ENCODE measurements at regions of chr1 and their contacts with region 1.

Region 1: GRCh38 chr1:235999259-235999925 is 65.5 kb downstream of the NID1 start:
- DNase-seq: peak; percentile 74
- H3K4me3 ChIP-seq: no peak overlapping the region
- H3K27ac ChIP-seq: peak overlapping the region; percentile 90
- H3K27me3 ChIP-seq: no peaks in the 10 kb centered on the region
- CTCF ChIP-seq: no peak

Region 2: GRCh38 chr1:235739124-235739523 is 260.3 kb before region 1 on chr1:
- CTCF ChIA-PET with region 1: no interaction called
- POLR2A ChIA-PET with region 1: no interaction called
- DNase-seq: peak; percentile 58
- H3K4me3 ChIP-seq: no peak overlapping the region
- H3K27ac ChIP-seq: no peak overlapping the region
- H3K27me3 ChIP-seq: no peaks in the 10 kb centered on the region
- CTCF ChIP-seq: no peak

Region 3: DNA sequence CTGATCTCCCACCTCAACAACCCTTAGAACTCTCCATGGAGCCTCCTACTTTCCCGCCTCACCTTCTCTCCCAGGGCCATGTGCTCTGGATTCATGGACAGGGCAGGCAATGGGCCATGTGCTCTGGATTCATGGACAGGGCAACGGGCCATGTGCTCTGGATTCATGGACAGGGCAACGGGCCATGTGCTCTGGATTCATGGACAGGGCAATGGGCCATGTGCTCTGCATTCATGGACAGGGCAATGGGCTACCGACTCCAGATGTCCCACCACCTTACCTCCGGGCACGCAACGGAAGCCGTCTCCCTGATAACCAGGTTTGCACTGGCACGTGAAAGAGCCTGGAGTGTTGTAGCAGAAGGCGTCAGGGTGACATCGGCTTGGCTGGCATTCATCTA is 12.2 kb after region 1 on chr1:
- CTCF ChIA-PET with region 1: interaction called, 3 read pairs
- POLR2A ChIA-PET with region 1: interaction called, 10 read pairs
- DNase-seq: no peak
- H3K4me3 ChIP-seq: no peak overlapping the region
- H3K27ac ChIP-seq: no peak overlapping the region
- H3K27me3 ChIP-seq: no peaks in the 10 kb centered on the region
- CTCF ChIP-seq: no peak